Lower leg skin (tissue), 4 donors: ENCODE measurements at regions of chr6 and their contacts with region 1.

Region 1: DNA sequence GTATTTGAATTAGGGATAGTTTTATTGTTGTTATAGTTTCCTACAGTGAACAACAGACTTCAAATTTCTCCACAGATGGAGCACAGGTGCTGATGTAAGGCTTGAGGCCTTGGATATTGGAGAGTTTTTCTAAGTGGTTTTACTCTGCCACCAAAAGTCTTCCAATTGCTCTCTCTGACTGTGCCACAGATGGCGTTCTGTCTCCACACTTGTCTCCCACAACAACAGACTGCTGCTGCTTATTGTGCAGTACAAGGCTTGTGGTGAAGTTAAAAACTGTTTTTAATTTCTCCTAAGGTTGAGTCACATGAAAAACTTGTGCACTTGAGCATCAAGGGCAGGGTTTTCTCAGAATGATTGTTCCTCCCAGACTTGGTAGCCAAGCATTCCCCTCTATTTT is 460.9 kb upstream of the KHDRBS2 start:
- DNase-seq: no peak
- H3K4me3 ChIP-seq: no peak overlapping the region
- CTCF ChIP-seq: no peak
- POLR2A ChIP-seq: no peak

Region 2: GRCh38 chr6:62528894-62529526 is 218.0 kb before region 1 on chr6:
- intact Hi-C with region 1: no loop called
- DNase-seq: no peak
- H3K4me3 ChIP-seq: no peak overlapping the region
- CTCF ChIP-seq: no peak
- POLR2A ChIP-seq: no peak

Region 3: GRCh38 chr6:62904677-62905076 is 157.7 kb after region 1 on chr6:
- intact Hi-C with region 1: no loop called
- DNase-seq: no peak
- H3K4me3 ChIP-seq: no peak overlapping the region
- CTCF ChIP-seq: no peak
- POLR2A ChIP-seq: no peak

Region 4: GRCh38 chr6:63280639-63281180 is 533.7 kb after region 1 on chr6:
- intact Hi-C with region 1: loop called (anchors 10 kb)
- DNase-seq: no peak
- H3K4me3 ChIP-seq: no peak overlapping the region
- CTCF ChIP-seq: no peak
- POLR2A ChIP-seq: no peak